ENCODE measurements at regions of chr7 and their contacts with region 1.

Region 1: DNA sequence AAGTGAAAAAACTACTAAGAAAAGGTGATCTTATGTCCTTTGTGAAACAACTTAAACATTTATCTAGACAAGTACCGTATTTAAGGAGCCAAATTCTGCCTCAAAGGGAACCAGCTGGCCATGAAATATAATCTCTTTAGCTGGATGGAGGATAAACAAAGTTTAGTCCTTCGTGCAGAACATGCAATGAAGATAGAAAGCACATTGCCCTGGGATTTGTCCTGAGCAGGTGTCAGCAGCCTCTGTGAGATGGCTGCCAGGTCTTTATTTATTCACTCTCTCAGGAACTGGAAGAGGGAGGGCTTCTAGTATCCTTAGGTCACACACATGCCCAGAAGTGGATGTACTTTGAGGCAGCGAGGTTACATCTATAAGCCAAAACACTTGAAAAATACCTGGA is 57.4 kb upstream of the CASD1 start:
- DNase-seq: peak in 1 of 4 donors; percentile 25
- ATAC-seq: peak; percentile 94
- H3K4me3 ChIP-seq: no peak overlapping the region
- H3K27ac ChIP-seq: no peak overlapping the region
- H3K4me1 ChIP-seq: no peaks in the 10 kb centered on the region
- H3K27me3 ChIP-seq: no peaks in the 10 kb centered on the region
- CTCF ChIP-seq: no peak

Region 2: GRCh38 chr7:94313926-94314325 is 138.3 kb before region 1 on chr7:
- intact Hi-C with region 1: no loop called
- DNase-seq: no peak
- ATAC-seq: no peak
- H3K4me3 ChIP-seq: no peak overlapping the region
- H3K27ac ChIP-seq: no peak overlapping the region
- H3K4me1 ChIP-seq: no peaks in the 10 kb centered on the region
- H3K27me3 ChIP-seq: no peaks in the 10 kb centered on the region
- CTCF ChIP-seq: no peak

Region 3: GRCh38 chr7:94374231-94374630 is 78.0 kb before region 1 on chr7:
- intact Hi-C with region 1: no loop called
- DNase-seq: peak; percentile 54 to 89 (median 76)
- ATAC-seq: peak; percentile 86
- H3K4me3 ChIP-seq: no peak overlapping the region
- H3K27ac ChIP-seq: peak overlapping the region; percentile 42 to 84
- H3K4me1 ChIP-seq: no peaks in the 10 kb centered on the region
- H3K27me3 ChIP-seq: no peaks in the 10 kb centered on the region
- CTCF ChIP-seq: no peak

Region 4: GRCh38 chr7:94561841-94562514 is 109.7 kb after region 1 on chr7:
- intact Hi-C with region 1: no loop called
- DNase-seq: no peak
- ATAC-seq: no peak
- H3K4me3 ChIP-seq: no peak overlapping the region
- H3K27ac ChIP-seq: no peak overlapping the region
- H3K4me1 ChIP-seq: no peaks in the 10 kb centered on the region
- H3K27me3 ChIP-seq: no peaks in the 10 kb centered on the region
- CTCF ChIP-seq: no peak

Region 5: DNA sequence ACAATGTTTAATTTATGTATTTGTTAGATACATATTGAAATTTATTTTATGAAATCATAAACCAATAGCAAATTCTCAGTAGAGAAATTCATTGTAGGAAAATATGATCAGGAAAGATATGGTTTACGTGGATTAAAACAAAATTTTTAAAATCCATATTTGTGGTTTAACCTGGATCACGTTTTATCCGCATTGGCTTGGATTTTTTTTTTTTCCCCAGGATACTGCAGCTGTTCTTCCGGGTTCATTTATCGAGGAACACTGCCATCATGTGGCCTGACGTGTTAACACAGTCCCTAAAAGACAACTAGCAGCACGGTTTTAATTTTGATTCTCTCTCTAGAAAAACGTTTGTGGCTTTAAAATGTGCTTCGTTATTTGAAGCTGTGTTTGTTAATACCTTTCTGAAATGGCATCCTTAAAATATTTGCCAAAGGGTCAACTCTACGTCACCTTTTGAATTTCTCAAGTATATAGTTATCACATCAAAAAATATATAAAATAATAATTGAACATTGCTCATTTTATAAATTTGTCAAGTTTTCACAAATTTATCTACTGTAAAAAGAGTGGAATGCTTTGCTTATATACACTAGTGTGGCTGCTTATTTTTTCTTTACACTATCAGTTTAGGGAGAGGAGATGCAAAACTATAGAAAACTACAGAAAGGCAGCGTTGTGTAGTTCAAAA is 1024.8 kb after region 1 on chr7:
- intact Hi-C with region 1: loop called in 1 of 2 experiments (anchors 10 kb)
- DNase-seq: peak in 3 of 4 donors; percentile 55 to 84 (median 73)
- ATAC-seq: peak; percentile 88
- H3K4me3 ChIP-seq: no peak overlapping the region
- H3K27ac ChIP-seq: no peak overlapping the region
- H3K4me1 ChIP-seq: peaks cover 0 to 9% of the 10 kb centered on the region in 2 donors
- H3K27me3 ChIP-seq: no peaks in the 10 kb centered on the region
- CTCF ChIP-seq: peak; percentile 63 to 73

Measured in left lung (tissue), 14 donors.